Activated CD8-positive, alpha-beta T cell treated with anti-CD3 and anti-CD28 coated beads for 36 hours (primary cell): ENCODE measurements at regions of chr17 and their contacts with region 1.

Region 1: GRCh38 chr17:17591355-17592298 is at the start of gene PEMT:
- DNase-seq: peak; percentile 98
- ATAC-seq: peak; percentile 94
- H3K4me3 Mint-ChIP-seq: peak within 1 kb of the TSS; percentile 99
- H3K27ac Mint-ChIP-seq: peak within 1 kb of the TSS; percentile 92
- H3K4me1 Mint-ChIP-seq: peaks cover 15% of the 10 kb centered on the region
- H3K27me3 Mint-ChIP-seq: no peaks in the 10 kb centered on the region
- CTCF ChIP-seq: no peak
- total RNA-seq, gene PEMT: 51.7 to 53.2 TPM

Region 2: DNA sequence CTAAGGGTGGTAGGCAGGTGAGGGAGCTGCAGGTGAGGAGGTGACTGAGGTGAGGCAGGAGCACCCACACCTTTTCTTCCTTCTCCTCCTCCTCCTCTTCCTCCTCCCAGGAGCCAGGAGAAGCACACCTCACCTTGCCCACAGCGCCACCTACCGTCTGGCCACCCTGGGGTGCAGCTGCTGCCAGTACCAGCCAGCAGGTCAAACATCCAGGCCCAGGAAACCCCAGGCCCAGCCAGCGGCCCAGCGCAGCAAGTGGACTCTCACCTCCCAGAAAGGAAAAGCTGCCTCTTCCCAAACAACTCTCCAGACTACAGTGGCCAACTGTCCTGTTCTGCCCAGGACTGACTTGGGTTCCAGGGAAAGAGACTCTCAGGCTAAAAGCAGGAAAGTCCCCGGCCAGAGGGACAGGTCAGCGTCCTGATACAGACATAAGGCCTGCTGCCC is 22.9 kb before region 1 on chr17:
- CTCF ChIA-PET with region 1: interaction called, 10 read pairs
- POLR2A ChIA-PET with region 1: no interaction called
- intact Hi-C with region 1: no loop called
- DNase-seq: peak; percentile 77
- ATAC-seq: peak; percentile 65
- H3K4me3 Mint-ChIP-seq: no peak overlapping the region
- H3K27ac Mint-ChIP-seq: no peak overlapping the region
- H3K4me1 Mint-ChIP-seq: no peaks in the 10 kb centered on the region
- H3K27me3 Mint-ChIP-seq: no peaks in the 10 kb centered on the region
- CTCF ChIP-seq: peak; percentile 76